Common myeloid progenitor, CD34-positive (primary cell): ENCODE measurements at regions of chr1 and their contacts with region 1.

Region 1: GRCh38 chr1:159936273-159936904 is 9.0 kb downstream of the IGSF9 start:
- DNase-seq: peak; percentile 56 to 74 (median 66)
- H3K4me3 ChIP-seq: peak overlapping the region in 1 of 7 experiments; percentile 74
- H3K27ac ChIP-seq: no peak overlapping the region
- H3K4me1 ChIP-seq: peaks cover 8 to 37% (median 23%) of the 10 kb centered on the region in 4 experiments
- H3K27me3 ChIP-seq: no peaks in the 10 kb centered on the region

Region 2: DNA sequence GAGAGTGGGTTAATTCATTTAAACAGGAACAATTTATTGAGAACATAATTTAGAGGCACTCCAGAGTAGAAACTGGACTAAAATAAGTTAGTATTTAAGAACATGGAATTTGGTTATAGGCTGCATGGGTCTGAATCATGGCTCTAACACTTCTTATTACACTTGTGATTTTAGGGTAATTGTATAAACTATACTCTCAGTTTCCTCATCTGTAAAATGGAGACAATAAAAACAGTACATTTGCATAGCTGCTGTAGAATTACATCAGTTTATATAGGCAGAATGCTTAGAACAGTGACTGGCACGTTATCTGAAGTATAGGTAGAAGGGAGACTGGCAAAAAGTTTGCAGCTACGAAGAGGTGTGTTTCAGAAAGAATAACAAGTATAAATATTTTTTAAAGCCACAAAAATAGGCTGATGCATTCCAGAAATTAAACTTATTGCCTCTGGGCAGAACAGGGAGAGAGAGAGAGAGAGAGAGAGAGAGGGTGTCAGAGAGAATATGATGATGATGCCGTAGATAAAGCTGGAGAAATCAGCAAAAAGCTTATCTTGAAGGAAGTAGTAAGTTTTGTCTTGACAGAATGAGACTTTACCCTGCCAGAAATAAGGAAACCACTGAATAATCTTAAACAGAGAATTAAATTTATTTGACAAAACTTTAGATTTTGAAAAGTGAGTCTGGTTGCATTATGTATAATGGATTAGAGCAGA is 1207.7 kb before region 1 on chr1:
- CTCF ChIA-PET with region 1: no interaction called
- POLR2A ChIA-PET with region 1: no interaction called
- DNase-seq: peak in 2 of 3 donors; percentile 3 to 27
- H3K4me3 ChIP-seq: no peak overlapping the region
- H3K27ac ChIP-seq: no peak overlapping the region
- H3K4me1 ChIP-seq: no peaks in the 10 kb centered on the region
- H3K27me3 ChIP-seq: no peaks in the 10 kb centered on the region

Region 3: DNA sequence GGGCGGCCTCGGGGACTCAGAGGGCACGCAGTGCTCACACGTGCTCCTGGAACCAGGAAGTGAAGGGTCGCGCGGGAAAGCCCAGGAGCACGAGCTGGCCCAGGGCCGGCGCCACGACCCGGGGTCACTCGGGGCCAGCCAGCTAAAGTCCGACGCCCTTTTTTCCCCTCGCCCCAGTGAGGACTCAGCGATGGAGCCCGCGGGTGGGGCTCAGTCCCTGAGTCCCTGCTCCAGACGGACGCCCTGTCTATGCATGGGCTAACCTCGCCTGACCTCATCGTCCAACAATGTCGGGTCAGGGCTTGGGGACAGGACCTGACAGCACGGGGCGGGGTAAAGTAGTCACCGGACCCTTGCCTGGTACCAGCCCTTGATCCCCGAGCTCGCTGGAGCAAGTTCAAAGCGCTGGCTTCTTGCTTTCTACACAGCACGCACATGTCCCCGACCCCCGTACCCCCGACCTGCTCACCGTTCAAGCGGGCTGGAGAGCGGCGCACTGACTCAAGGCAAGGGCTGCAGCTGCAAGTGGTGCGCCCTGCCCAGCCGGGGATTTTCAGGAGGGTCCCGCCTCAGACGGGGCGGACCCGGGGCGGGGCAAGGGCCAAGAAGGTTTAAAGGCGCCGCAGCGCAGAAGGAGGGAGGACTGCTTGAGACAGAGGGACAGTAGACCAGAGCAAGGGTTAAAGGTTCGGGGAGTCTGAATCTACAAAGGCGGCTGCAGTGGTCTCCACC is 11.2 kb before region 1 on chr1 and contains the start of gene TAGLN2:
- CTCF ChIA-PET with region 1: interaction called, 57 read pairs
- POLR2A ChIA-PET with region 1: interaction called, 7 read pairs
- DNase-seq: peak; percentile 85 to 93 (median 91)
- H3K4me3 ChIP-seq: peak within 1 kb of the TSS; percentile 85 to 100 (median 94)
- H3K27ac ChIP-seq: peak within 1 kb of the TSS; percentile 100
- H3K4me1 ChIP-seq: peaks cover 7 to 53% (median 49%) of the 10 kb centered on the region in 4 experiments
- H3K27me3 ChIP-seq: no peaks in the 10 kb centered on the region

Region 4: DNA sequence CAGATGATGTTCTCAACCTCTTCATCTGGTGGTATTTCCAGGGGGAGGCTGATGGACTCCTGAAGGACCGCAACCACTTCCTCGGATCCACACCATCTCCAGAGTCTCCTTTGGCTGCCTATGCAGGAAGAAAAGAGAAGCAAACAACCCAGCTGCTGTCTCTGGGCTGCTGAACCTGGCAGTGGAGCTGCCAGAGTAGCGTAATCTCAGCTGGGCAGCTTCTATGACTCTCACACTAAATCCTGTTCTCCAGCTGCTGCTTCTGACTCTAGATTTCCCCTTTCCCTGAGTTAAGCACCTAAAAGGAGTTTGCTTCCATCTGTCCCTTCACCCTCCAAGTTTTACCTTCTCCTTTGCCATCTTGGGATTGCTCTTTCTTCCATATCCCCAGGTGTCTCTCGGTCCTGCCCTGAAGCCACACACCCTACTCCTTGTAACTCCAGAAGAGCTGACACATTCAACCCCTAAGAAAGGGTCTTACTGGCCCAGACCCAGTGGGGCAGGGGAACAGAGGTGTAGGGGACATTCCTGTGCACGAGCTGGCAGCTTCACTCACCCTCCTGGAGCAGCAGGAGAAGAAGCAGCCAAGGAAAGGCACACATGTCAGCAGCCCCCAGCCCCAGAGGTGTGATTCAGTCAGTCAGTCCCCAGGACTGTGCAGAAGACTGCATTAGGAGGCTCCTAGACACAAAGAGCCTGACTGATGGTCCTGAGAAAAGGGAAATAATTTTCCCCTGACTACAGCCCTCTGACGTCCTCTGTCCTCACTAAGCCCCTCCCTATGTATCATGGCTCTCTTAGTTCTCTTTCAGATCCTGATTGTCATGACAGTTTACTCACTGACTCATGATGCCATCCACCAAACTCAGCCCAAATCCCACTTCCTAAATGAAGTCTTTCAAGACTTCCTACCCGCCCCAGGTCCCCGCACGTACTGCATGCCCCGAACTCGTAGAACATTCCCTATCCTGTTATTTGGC is 17.4 kb after region 1 on chr1 and contains the start of gene SLAMF9:
- CTCF ChIA-PET with region 1: interaction called, 24 read pairs
- POLR2A ChIA-PET with region 1: no interaction called
- DNase-seq: peak in 2 of 3 donors; percentile 17 to 44
- H3K4me3 ChIP-seq: no peak within 1 kb of the TSS
- H3K27ac ChIP-seq: no peak within 1 kb of the TSS
- H3K4me1 ChIP-seq: no peaks in the 10 kb centered on the region
- H3K27me3 ChIP-seq: peaks cover 0 to 7% (median 0%) of the 10 kb centered on the region in 5 experiments

Region 5: GRCh38 chr1:160098852-160099561 is 162.6 kb after region 1 on chr1:
- CTCF ChIA-PET with region 1: no interaction called
- POLR2A ChIA-PET with region 1: no interaction called
- DNase-seq: peak; percentile 92 to 96 (median 95)
- H3K4me3 ChIP-seq: peak overlapping the region; percentile 37 to 89 (median 71)
- H3K27ac ChIP-seq: peak overlapping the region; percentile 41 to 87
- H3K4me1 ChIP-seq: peaks cover 0 to 48% (median 35%) of the 10 kb centered on the region in 4 experiments
- H3K27me3 ChIP-seq: no peaks in the 10 kb centered on the region